ENCODE measurements at regions of chr3 and their contacts with region 1.

Region 1: GRCh38 chr3:35908366-35909232 is 269.3 kb downstream of the ARPP21 start:
- DNase-seq: peak; percentile 58 to 81 (median 71)
- H3K4me3 ChIP-seq: no peak overlapping the region
- H3K27ac ChIP-seq: no peak overlapping the region
- H3K4me1 ChIP-seq: no peaks in the 10 kb centered on the region
- H3K27me3 ChIP-seq: no peaks in the 10 kb centered on the region

Region 2: DNA sequence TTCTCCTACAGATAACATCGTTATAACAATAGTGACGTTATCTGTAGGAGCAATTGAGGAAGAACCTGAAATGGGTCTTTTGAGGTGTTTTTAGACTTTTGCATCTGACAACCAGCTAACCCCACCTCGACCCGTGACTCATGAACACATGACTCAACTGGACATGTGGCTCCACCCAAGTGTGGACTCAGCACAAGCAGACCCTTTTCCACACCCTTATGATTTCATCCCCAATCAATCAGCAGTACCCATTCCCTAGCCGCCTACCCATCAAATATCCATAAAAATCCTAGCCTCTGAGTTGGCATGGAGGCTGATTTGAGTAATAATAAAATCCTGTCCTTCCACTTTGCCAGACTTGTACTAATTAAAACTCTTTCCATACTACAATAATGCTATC is 13.9 kb before region 1 on chr3:
- CTCF ChIA-PET with region 1: interaction called, 14 read pairs
- POLR2A ChIA-PET with region 1: no interaction called
- DNase-seq: no peak
- H3K4me3 ChIP-seq: no peak overlapping the region
- H3K27ac ChIP-seq: no peak overlapping the region
- H3K4me1 ChIP-seq: no peaks in the 10 kb centered on the region
- H3K27me3 ChIP-seq: no peaks in the 10 kb centered on the region